A673 (cell line): ENCODE measurements at regions of chr4 and their contacts with region 1.

Region 1: DNA sequence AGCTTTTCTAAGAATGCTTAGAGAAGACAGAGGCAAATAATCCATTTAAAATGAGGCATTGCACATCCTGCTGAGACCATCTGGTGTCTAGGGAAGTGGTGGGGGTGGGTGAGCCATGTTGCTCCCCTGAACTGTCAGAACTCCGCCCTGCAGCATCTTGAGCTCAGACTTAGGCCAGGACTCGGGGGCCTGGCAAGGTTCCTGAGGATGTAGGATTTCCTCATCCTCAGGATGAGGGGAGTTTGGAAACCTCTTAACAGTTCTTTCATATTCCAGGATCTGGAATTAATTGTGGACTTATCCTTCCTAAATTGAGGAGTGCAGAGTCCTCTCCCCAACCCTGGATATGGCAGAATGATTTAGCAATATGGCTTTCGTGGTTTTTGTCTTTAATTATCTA is 6.6 kb downstream of the TLL1 start:
- DNase-seq: peak; percentile 66
- H3K4me3 ChIP-seq: no peak overlapping the region
- H3K27ac ChIP-seq: no peak overlapping the region
- H3K4me1 ChIP-seq: peaks cover 29% of the 10 kb centered on the region
- H3K27me3 ChIP-seq: peaks cover 10% of the 10 kb centered on the region
- CTCF ChIP-seq: no peak

Region 2: GRCh38 chr4:164989471-164989870 is 890.2 kb before region 1 on chr4:
- CTCF ChIA-PET with region 1: no interaction called
- POLR2A ChIA-PET with region 1: no interaction called
- intact Hi-C with region 1: no loop called
- DNase-seq: no peak
- H3K4me3 ChIP-seq: no peak overlapping the region
- H3K27ac ChIP-seq: no peak overlapping the region
- H3K4me1 ChIP-seq: no peaks in the 10 kb centered on the region
- H3K27me3 ChIP-seq: no peaks in the 10 kb centered on the region
- CTCF ChIP-seq: no peak

Region 3: DNA sequence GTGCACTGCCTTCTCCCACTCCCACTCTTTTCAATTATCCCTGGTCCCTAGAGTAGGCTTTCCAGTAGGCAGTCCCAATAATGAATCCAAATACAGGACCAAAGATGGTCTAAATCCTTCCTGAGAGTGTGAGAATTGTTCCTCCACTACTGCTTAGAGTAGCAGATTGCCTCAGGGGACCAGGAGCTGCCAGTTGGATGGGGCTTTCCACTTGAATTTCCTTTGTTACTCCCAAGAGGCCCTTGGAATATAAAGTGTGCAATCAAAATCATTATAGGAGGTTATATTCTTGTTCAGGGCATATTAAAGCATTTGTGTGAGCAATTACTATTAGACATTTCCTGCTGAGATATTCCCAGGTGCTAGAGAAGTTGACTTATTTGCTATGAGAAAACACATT is 163.2 kb before region 1 on chr4:
- CTCF ChIA-PET with region 1: no interaction called
- POLR2A ChIA-PET with region 1: no interaction called
- intact Hi-C with region 1: no loop called
- DNase-seq: peak; percentile 86
- H3K4me3 ChIP-seq: no peak overlapping the region
- H3K27ac ChIP-seq: no peak overlapping the region
- H3K4me1 ChIP-seq: peaks cover 39% of the 10 kb centered on the region
- H3K27me3 ChIP-seq: peaks cover 27% of the 10 kb centered on the region
- CTCF ChIP-seq: no peak

Region 4: DNA sequence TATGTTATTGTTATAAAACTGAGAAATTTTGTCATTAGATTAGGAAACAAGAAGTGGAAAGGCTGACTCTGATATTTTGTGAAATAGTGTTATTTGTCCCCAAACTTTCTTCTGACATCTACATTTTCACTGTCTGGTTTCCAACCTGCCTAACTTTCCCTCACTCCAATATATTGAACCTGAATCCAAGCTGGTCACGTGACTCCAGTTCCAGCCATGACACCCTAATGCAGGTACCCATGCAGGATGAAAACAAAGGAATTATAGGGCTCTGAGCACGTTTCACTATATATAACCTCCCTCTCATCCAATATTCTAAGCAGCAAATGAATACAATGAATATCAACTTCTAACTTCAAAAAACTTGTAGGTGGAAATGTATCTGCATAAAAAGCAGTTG is 225.0 kb after region 1 on chr4:
- CTCF ChIA-PET with region 1: no interaction called
- POLR2A ChIA-PET with region 1: interaction called, 12 read pairs
- intact Hi-C with region 1: no loop called
- DNase-seq: no peak
- H3K4me3 ChIP-seq: no peak overlapping the region
- H3K27ac ChIP-seq: no peak overlapping the region
- H3K4me1 ChIP-seq: no peaks in the 10 kb centered on the region
- H3K27me3 ChIP-seq: no peaks in the 10 kb centered on the region
- CTCF ChIP-seq: no peak